Activated CD4-positive, alpha-beta T cell treated with anti-CD3 and anti-CD28 coated beads, Interleukin-2, amount 10 ng/mL, durations not matched to agents 7 days and 5 days (primary cell): ENCODE measurements at regions of chr14 and their contacts with region 1.

Region 1: GRCh38 chr14:50726372-50727107 is 58.4 kb upstream of the SAV1 start:
- DNase-seq: peak; percentile 39
- H3K4me3 Mint-ChIP-seq: peak overlapping the region; percentile 15
- H3K27ac Mint-ChIP-seq: peak overlapping the region; percentile 85
- H3K4me1 Mint-ChIP-seq: peaks cover 26% of the 10 kb centered on the region
- H3K27me3 Mint-ChIP-seq: no peaks in the 10 kb centered on the region

Region 2: DNA sequence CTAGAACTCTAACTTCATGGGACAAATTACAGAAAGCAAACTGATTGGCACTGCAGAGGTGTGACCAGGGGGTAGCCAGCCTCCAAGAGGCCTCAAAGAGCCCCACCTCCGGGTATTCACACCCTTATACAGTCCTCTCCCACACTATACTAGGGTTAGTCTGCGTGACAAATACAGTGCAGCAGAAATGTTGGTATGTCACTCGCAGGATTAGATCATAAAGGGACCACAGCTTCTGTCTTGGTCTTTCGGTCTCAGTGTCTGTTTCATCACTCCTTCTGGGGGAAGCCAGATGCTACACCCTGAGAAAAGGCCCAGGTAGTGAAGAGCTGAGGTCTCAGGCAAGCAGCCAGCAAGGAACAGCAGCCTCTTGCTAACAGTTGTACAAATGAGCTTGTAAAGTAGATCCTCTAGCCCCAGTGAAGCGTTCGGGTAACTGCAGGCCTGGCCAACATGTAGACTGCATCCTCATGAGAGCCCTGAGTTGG is 10.4 kb after region 1 on chr14:
- CTCF ChIA-PET with region 1: interaction called, 20 read pairs
- POLR2A ChIA-PET with region 1: no interaction called
- DNase-seq: peak; percentile 16
- H3K4me3 Mint-ChIP-seq: no peak overlapping the region
- H3K27ac Mint-ChIP-seq: peak overlapping the region; percentile 68
- H3K4me1 Mint-ChIP-seq: peaks cover 41% of the 10 kb centered on the region
- H3K27me3 Mint-ChIP-seq: no peaks in the 10 kb centered on the region

Region 3: GRCh38 chr14:50750323-50750722 is 23.8 kb after region 1 on chr14:
- CTCF ChIA-PET with region 1: no interaction called
- POLR2A ChIA-PET with region 1: no interaction called
- DNase-seq: no peak
- H3K4me3 Mint-ChIP-seq: no peak overlapping the region
- H3K27ac Mint-ChIP-seq: no peak overlapping the region
- H3K4me1 Mint-ChIP-seq: peaks cover 33% of the 10 kb centered on the region
- H3K27me3 Mint-ChIP-seq: no peaks in the 10 kb centered on the region

Region 4: DNA sequence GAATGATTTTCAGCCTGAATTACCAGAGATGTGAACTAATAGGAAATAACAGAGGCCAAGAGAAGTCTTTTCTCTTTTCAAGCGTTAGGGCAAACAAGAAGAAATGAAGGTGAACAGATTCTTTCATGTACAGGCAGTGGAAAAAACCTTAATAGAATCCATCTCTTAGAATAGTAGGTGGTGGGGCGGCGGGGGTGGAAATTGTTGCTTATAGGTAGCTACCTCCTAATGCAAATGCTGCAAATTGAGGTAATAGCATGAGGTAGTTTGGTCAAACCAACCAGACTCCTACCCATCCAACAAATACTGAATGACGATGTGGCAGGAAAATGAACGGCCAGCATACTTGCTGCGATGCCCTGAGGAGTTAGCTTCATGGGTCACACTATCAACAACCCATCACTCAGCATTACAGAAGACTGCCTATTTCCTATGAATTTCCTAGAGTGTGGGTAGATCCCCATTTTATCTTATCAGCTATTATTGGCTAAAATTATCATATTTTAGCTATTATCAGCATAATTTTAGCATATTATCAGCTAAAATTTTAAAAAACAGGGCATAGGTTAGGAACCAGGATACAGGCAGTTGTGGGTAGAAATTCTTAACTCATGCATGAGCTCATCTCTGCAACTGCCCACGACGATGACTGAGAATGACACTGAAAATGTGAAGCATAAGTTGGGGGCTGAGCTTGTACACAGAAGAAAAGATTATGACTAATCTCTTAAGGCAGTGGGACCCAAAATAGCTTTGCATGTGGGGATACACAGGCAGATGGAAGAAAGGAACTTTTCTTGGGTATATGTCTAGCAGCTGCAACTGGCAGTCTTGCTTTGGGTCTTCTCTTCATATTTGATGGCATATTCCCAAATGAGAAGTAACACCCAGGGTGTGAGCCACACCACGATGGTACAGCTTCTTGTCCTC is 35.7 kb after region 1 on chr14:
- CTCF ChIA-PET with region 1: no interaction called
- POLR2A ChIA-PET with region 1: no interaction called
- DNase-seq: no peak
- H3K4me3 Mint-ChIP-seq: no peak overlapping the region
- H3K27ac Mint-ChIP-seq: no peak overlapping the region
- H3K4me1 Mint-ChIP-seq: peaks cover 7% of the 10 kb centered on the region
- H3K27me3 Mint-ChIP-seq: no peaks in the 10 kb centered on the region

Region 5: DNA sequence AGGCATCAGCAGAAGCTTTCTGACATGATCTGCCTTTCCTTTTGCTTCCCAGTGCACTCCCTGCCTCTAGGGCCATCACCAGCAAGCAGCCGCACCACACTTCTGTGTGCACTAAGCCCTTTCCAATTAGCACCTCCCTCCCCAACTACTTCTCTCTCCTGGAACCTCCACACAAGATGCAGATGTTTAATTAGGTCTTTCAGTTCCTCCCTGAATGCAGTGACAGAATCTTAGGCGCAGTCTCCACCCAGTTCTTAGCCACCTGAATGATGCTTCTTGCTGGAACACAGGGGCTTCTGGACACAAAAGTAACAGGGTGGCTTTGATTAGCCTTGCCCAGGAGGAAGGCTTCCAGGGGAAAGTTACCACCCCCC is 71.5 kb after region 1 on chr14:
- CTCF ChIA-PET with region 1: no interaction called
- POLR2A ChIA-PET with region 1: no interaction called
- DNase-seq: no peak
- H3K4me3 Mint-ChIP-seq: no peak overlapping the region
- H3K27ac Mint-ChIP-seq: no peak overlapping the region
- H3K4me1 Mint-ChIP-seq: peaks cover 17% of the 10 kb centered on the region
- H3K27me3 Mint-ChIP-seq: no peaks in the 10 kb centered on the region